Activated CD4-positive, alpha-beta T cell treated with anti-CD3 and anti-CD28 coated beads for 36 hours (primary cell): ENCODE measurements at regions of chr5 and their contacts with region 1.

Region 1: GRCh38 chr5:139765409-139766217 is 30.0 kb upstream of the PSD2 start:
- DNase-seq: peak; percentile 92
- ATAC-seq: peak; percentile 93
- H3K4me3 Mint-ChIP-seq: peak overlapping the region; percentile 58
- H3K27ac Mint-ChIP-seq: no peak overlapping the region
- H3K4me1 Mint-ChIP-seq: peaks cover 7% of the 10 kb centered on the region
- H3K27me3 Mint-ChIP-seq: peaks cover 26% of the 10 kb centered on the region

Region 2: DNA sequence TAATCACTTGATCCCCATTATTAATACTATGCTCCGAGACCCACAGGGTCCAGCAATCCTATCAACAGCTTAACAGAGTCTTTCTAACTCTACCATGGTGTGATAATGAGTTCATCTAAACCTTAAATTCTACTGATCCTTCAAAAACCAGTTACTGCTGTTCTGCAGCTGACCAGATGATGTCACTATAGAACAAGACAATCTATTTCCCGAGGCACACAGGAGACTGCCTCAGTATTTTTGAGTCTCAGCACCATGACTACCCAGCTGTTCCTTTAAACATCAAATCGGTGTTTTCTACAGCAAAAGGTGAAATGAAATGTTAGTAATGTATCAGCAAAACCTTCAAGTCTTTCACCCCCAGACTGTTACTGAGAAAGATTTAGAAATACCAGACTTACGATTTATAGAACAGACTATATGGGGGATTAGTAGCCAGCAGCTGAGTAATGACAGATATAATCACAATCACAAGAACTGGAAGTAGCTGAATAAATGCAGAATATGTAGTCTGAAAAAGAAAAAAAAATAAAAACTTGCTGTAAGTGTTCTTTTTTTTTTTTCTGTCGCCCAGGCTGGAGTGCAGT is 343.2 kb before region 1 on chr5:
- CTCF ChIA-PET with region 1: no interaction called
- POLR2A ChIA-PET with region 1: no interaction called
- intact Hi-C with region 1: loop called (anchors 5 to 10 kb)
- DNase-seq: peak; percentile 66
- ATAC-seq: peak; percentile 93
- H3K4me3 Mint-ChIP-seq: no peak overlapping the region
- H3K27ac Mint-ChIP-seq: no peak overlapping the region
- H3K4me1 Mint-ChIP-seq: peaks cover 5% of the 10 kb centered on the region
- H3K27me3 Mint-ChIP-seq: no peaks in the 10 kb centered on the region

Region 3: GRCh38 chr5:139711067-139711905 is 54.3 kb before region 1 on chr5:
- CTCF ChIA-PET with region 1: interaction called, 9 read pairs
- POLR2A ChIA-PET with region 1: no interaction called
- intact Hi-C with region 1: loop called in 1 of 2 experiments (anchors 2 kb)
- DNase-seq: peak; percentile 78
- ATAC-seq: peak; percentile 84
- H3K4me3 Mint-ChIP-seq: peak overlapping the region; percentile 52
- H3K27ac Mint-ChIP-seq: no peak overlapping the region
- H3K4me1 Mint-ChIP-seq: peaks cover 13% of the 10 kb centered on the region
- H3K27me3 Mint-ChIP-seq: peaks cover 5% of the 10 kb centered on the region

Region 4: DNA sequence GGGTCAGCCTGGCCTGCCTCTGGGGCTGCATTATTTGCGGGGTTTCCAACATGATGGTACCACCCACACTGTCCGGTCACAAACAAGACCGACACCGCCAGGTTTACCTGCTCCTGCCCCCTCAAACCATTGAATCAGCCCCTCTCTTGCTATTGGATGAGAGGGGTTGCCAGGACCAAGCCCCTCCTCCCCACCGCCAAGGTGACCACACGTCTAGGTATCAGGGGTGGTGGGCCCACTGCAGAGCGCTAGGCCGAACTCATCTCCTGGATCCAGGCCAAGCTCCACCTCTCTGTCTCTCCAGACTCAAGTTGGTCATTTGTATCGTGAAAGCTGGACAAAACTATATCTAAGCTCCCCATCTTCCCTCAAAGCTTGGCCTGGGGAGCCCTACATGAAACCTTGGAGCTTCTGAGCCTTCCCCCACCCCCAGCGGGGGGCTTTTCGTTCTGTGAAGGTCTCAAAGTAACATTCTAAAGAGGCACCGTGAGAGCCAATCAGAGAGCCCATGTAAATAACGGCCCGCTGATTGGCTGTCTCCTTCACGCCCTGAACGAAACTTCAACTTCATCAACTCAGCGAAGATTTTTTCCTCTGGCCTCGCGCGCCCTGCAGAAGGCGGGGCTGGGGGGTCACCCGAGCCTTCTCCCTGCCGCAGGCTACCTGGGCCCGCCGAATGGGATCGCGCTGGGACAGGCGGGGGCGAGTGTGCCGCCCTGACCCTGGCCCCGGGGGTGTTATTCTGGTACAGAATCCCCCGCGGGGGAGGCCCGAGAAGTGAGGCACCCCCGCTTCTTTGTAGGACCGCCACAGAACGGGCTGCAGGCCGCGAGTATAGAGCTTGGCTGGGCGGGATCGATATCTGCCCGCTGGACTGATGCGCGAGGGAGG is 19.6 kb before region 1 on chr5:
- CTCF ChIA-PET with region 1: interaction called, 11 read pairs
- POLR2A ChIA-PET with region 1: no interaction called
- intact Hi-C with region 1: loop called in 1 of 2 experiments (anchors 1 kb)
- DNase-seq: peak; percentile 70
- ATAC-seq: peak; percentile 27
- H3K4me3 Mint-ChIP-seq: peak overlapping the region; percentile 60
- H3K27ac Mint-ChIP-seq: no peak overlapping the region
- H3K4me1 Mint-ChIP-seq: peaks cover 29% of the 10 kb centered on the region
- H3K27me3 Mint-ChIP-seq: peaks cover 16% of the 10 kb centered on the region

Region 5: GRCh38 chr5:139752506-139753473 is 12.8 kb before region 1 on chr5:
- CTCF ChIA-PET with region 1: interaction called, 16 read pairs
- POLR2A ChIA-PET with region 1: interaction called, 4 read pairs
- intact Hi-C with region 1: loop called in 1 of 2 experiments (anchors 1 kb)
- DNase-seq: peak; percentile 42
- ATAC-seq: peak; percentile 57
- H3K4me3 Mint-ChIP-seq: no peak overlapping the region
- H3K27ac Mint-ChIP-seq: no peak overlapping the region
- H3K4me1 Mint-ChIP-seq: peaks cover 24% of the 10 kb centered on the region
- H3K27me3 Mint-ChIP-seq: peaks cover 30% of the 10 kb centered on the region